Adrenal gland (tissue), 19 donors: ENCODE measurements at regions of chr1 and their contacts with region 1.

Region 1: GRCh38 chr1:1063945-1064831 is 9.9 kb downstream of the RNF223 start:
- DNase-seq: peak; percentile 48 to 70 (median 56)
- H3K4me3 ChIP-seq: no peak overlapping the region
- H3K27ac ChIP-seq: no peak overlapping the region
- H3K4me1 ChIP-seq: peaks cover 9 to 10% of the 10 kb centered on the region in 2 donors
- H3K27me3 ChIP-seq: peaks cover 66% of the 10 kb centered on the region
- CTCF ChIP-seq: peak; percentile 73 to 88 (median 84)
- POLR2A ChIP-seq: no peak

Region 2: GRCh38 chr1:921011-921837 is 143.0 kb before region 1 on chr1:
- intact Hi-C with region 1: no loop called
- DNase-seq: peak in 5 of 7 donors; percentile 53 to 70 (median 62)
- H3K4me3 ChIP-seq: no peak overlapping the region
- H3K27ac ChIP-seq: no peak overlapping the region
- H3K4me1 ChIP-seq: peaks cover 13 to 40% of the 10 kb centered on the region in 2 donors
- H3K27me3 ChIP-seq: peaks cover 63% of the 10 kb centered on the region
- CTCF ChIP-seq: peak; percentile 22 to 61 (median 46)
- POLR2A ChIP-seq: no peak

Region 3: GRCh38 chr1:958823-959729 is 105.1 kb before region 1 on chr1 and contains the start of gene NOC2L:
- intact Hi-C with region 1: no loop called
- DNase-seq: peak; percentile 88 to 96 (median 93)
- H3K4me3 ChIP-seq: peak within 1 kb of the TSS; percentile 19 to 99 (median 92)
- H3K27ac ChIP-seq: peak within 1 kb of the TSS in 2 of 5 donors; percentile 48 to 61
- H3K4me1 ChIP-seq: peaks cover 17 to 20% of the 10 kb centered on the region in 2 donors
- H3K27me3 ChIP-seq: no peaks in the 10 kb centered on the region
- CTCF ChIP-seq: no peak
- POLR2A ChIP-seq: no peak
- total RNA-seq, gene NOC2L: 22.4 to 58.9 (median 43.6) TPM

Region 4: GRCh38 chr1:983799-984473 is 80.3 kb before region 1 on chr1:
- intact Hi-C with region 1: loop called (anchors 2 kb)
- DNase-seq: peak in 2 of 7 donors; percentile 48 to 54
- H3K4me3 ChIP-seq: no peak overlapping the region
- H3K27ac ChIP-seq: no peak overlapping the region
- H3K4me1 ChIP-seq: no peaks in the 10 kb centered on the region
- H3K27me3 ChIP-seq: peaks cover 25% of the 10 kb centered on the region
- CTCF ChIP-seq: peak; percentile 51 to 92 (median 62)
- POLR2A ChIP-seq: no peak